Mucosa of descending colon (tissue), 3 donors: ENCODE measurements at regions of chr1 and their contacts with region 1.

Region 1: GRCh38 chr1:17494114-17494729 is 45.3 kb upstream of the ARHGEF10L start:
- DNase-seq: peak; percentile 71 to 85 (median 76)
- ATAC-seq: peak; percentile 91
- H3K4me3 ChIP-seq: no peak overlapping the region
- H3K4me1 ChIP-seq: no peaks in the 10 kb centered on the region
- CTCF ChIP-seq: peak; percentile 75

Region 2: DNA sequence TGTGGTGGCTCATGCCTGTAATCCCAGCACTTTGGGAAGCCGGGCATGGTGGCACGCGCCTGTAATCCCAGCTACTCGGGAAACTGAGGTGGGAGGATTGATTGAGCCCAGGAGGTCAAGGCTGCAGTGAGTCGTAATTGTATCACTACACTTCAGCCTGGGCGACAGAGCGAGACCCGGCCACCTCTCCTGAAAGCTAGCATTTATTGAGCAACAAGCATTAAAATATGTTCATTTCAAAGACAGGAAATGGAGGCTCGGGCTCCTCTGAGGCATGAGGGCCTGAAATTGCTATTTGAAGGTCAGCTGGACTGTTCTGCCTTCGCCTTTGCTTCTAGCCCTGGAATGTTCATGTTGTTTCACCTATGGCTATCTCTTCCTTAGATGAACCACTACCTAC is 1091.5 kb before region 1 on chr1:
- intact Hi-C with region 1: no loop called
- DNase-seq: no peak
- ATAC-seq: no peak
- H3K4me3 ChIP-seq: no peak overlapping the region
- H3K4me1 ChIP-seq: no peaks in the 10 kb centered on the region
- CTCF ChIP-seq: no peak

Region 3: DNA sequence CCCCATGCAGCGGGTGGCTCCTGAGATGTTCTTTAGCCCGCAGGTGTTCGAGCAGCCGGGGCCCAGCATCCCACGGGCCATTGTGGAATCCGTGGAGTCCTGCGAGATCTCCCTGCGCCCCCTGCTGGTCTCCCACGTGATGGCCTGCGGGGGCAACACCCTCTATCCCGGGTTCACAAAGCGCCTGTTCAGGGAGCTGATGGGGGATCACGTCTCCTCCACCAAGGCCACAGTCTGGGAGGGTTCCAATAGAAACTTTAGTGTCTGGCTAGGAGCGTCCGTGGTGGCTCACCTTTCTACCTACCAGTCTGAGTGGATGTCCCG is 331.9 kb after region 1 on chr1:
- intact Hi-C with region 1: loop called in 1 of 2 experiments (anchors 10 kb)
- DNase-seq: peak; percentile 57 to 82 (median 77)
- ATAC-seq: peak; percentile 83
- H3K4me3 ChIP-seq: no peak overlapping the region
- H3K4me1 ChIP-seq: no peaks in the 10 kb centered on the region
- CTCF ChIP-seq: peak; percentile 61